CD8-positive, alpha-beta T cell (primary cell): ENCODE measurements at regions of chr3 and their contacts with region 1.

Region 1: DNA sequence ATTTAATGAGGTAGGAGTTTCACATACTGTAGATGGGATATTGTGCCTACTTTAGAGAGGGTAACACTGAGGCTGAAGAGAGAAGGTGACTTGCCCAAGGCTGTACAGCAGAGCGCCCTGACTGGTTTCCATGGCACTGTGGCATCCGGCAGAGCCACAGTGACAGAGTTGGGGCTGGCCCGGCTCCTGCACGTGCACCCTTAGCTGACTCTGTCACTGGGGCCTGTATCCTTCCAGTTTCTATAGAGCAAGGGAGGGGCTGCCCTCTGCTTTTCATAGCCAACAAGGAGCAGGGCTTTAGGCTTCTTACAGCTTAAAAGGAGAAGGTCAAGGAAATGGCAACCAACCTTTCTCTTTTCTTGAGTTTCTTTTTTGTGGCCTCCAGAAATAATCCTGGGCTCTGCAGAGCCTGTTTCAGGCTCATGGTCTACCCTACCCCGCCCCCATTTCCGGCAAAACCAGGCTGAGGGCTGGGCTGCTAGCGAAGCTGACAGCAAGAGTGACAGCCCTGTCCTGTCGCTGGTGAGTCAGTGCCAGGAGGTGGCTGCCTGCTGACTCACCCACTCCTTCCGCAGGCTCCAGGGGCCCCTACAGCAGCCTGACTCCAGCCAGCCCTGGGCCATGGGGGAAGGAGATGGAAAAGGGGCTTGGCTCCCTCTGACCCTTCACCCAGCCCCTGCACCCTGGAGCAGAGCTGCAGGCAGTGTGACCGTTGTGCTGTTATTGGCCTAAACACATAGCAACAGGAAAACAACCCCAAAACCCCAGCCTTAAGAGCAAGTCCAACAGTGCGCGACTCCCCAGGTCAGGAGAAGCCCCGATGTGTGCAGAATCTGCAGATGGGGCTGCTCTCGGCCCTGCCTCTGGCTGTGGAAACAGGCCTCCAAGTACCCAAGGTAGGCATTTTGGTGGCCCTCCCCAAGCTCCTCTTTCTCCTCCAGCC is 29.8 kb downstream of the SLC6A6 start:
- DNase-seq: peak; percentile 85 to 97 (median 95)
- ATAC-seq: peak; percentile 83
- H3K4me3 ChIP-seq: peak overlapping the region in 1 of 2 experiments; percentile 27
- H3K4me3 Mint-ChIP-seq: peak overlapping the region; percentile 75
- H3K27ac ChIP-seq: peak overlapping the region; percentile 66 to 95
- H3K27ac Mint-ChIP-seq: peak overlapping the region; percentile 99
- H3K4me1 ChIP-seq: peaks cover 75% of the 10 kb centered on the region
- H3K4me1 Mint-ChIP-seq: peaks cover 85% of the 10 kb centered on the region
- H3K27me3 ChIP-seq: no peaks in the 10 kb centered on the region
- H3K27me3 Mint-ChIP-seq: no peaks in the 10 kb centered on the region
- CTCF ChIP-seq: no peak

Region 2: DNA sequence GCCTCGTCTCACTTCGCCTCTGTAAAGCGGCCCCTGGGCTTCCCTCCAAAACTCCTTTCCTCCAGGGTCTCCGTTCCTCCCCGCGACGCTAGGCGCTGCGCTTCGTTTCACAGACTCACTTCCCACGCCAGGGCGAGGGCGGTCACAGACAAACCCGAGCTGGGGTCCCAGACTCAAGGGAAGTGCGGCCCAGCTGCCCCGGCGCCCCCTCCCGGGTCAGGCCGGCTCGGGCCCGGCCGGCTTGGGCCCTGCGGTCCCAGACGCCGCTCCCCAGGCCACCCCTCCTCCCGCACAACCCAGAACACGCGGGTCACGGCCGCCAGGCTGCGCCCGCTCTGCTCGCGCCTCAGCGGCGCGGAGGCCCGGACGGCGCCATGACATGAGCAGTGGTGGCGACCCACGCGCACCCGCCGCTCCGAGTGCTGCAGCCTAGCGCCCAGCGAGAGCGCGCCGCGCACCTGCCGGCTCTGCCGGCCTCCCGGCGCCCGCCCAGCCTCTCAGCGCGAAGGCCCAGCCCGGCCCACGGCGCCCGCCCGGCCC is 1012.6 kb before region 1 on chr3:
- CTCF ChIA-PET with region 1: no interaction called
- POLR2A ChIA-PET with region 1: no interaction called
- intact Hi-C with region 1: loop called (anchors 10 kb)
- DNase-seq: peak; percentile 40 to 83 (median 66)
- ATAC-seq: peak; percentile 29
- H3K4me3 ChIP-seq: peak overlapping the region; percentile 72 to 82
- H3K4me3 Mint-ChIP-seq: peak overlapping the region; percentile 91
- H3K27ac ChIP-seq: peak overlapping the region; percentile 74 to 89
- H3K27ac Mint-ChIP-seq: peak overlapping the region; percentile 96
- H3K4me1 ChIP-seq: peaks cover 57% of the 10 kb centered on the region
- H3K4me1 Mint-ChIP-seq: peaks cover 76% of the 10 kb centered on the region
- H3K27me3 ChIP-seq: no peaks in the 10 kb centered on the region
- H3K27me3 Mint-ChIP-seq: no peaks in the 10 kb centered on the region
- CTCF ChIP-seq: no peak

Region 3: DNA sequence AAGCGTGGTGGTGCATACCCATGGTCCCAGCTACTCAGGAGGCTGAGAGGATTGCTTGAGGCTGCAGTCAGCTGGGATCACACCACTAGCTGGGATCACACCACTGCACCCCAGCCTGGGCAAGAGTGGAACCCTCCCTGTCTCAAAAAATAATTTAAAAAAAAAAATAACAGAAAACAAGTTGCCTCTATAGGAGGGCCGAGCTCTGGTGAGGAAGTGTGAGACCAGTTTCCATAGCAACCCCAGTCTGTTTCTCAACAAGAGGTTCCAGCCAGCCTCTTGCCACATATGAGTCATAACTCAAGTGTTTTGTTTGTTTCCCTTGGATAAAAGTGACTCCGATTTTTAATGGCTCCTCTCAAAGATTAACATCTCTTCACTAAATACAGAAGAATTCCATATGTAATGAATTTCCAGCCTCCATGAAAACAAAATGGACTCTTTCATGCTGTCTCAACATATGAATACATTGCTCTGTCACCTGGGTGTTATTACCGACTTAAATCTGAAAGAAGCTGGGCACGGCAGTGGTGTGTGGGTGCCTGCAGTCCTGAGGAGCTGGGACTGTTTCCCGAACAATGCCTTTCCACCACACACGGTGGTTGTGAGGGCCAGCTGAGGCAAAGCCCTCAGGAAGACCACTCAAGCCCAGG is 287.6 kb before region 1 on chr3:
- CTCF ChIA-PET with region 1: no interaction called
- POLR2A ChIA-PET with region 1: no interaction called
- intact Hi-C with region 1: loop called (anchors 1 to 2 kb)
- DNase-seq: peak; percentile 52 to 98 (median 71)
- ATAC-seq: peak; percentile 69
- H3K4me3 ChIP-seq: peak overlapping the region; percentile 15 to 20
- H3K4me3 Mint-ChIP-seq: peak overlapping the region; percentile 66
- H3K27ac ChIP-seq: peak overlapping the region; percentile 95 to 96
- H3K27ac Mint-ChIP-seq: peak overlapping the region; percentile 98
- H3K4me1 ChIP-seq: peaks cover 55% of the 10 kb centered on the region
- H3K4me1 Mint-ChIP-seq: peaks cover 48% of the 10 kb centered on the region
- H3K27me3 ChIP-seq: no peaks in the 10 kb centered on the region
- H3K27me3 Mint-ChIP-seq: no peaks in the 10 kb centered on the region
- CTCF ChIP-seq: no peak

Region 4: GRCh38 chr3:14461748-14462324 is 29.7 kb after region 1 on chr3:
- CTCF ChIA-PET with region 1: interaction called, 21 read pairs
- POLR2A ChIA-PET with region 1: interaction called, 4 read pairs
- intact Hi-C with region 1: loop called in 1 of 2 experiments (anchors 2 kb)
- DNase-seq: peak in 8 of 9 experiments; percentile 22 to 68 (median 53)
- ATAC-seq: peak; percentile 64
- H3K4me3 ChIP-seq: no peak overlapping the region
- H3K4me3 Mint-ChIP-seq: no peak overlapping the region
- H3K27ac ChIP-seq: no peak overlapping the region
- H3K27ac Mint-ChIP-seq: no peak overlapping the region
- H3K4me1 ChIP-seq: no peaks in the 10 kb centered on the region
- H3K4me1 Mint-ChIP-seq: no peaks in the 10 kb centered on the region
- H3K27me3 ChIP-seq: no peaks in the 10 kb centered on the region
- H3K27me3 Mint-ChIP-seq: no peaks in the 10 kb centered on the region
- CTCF ChIP-seq: no peak

Region 5: DNA sequence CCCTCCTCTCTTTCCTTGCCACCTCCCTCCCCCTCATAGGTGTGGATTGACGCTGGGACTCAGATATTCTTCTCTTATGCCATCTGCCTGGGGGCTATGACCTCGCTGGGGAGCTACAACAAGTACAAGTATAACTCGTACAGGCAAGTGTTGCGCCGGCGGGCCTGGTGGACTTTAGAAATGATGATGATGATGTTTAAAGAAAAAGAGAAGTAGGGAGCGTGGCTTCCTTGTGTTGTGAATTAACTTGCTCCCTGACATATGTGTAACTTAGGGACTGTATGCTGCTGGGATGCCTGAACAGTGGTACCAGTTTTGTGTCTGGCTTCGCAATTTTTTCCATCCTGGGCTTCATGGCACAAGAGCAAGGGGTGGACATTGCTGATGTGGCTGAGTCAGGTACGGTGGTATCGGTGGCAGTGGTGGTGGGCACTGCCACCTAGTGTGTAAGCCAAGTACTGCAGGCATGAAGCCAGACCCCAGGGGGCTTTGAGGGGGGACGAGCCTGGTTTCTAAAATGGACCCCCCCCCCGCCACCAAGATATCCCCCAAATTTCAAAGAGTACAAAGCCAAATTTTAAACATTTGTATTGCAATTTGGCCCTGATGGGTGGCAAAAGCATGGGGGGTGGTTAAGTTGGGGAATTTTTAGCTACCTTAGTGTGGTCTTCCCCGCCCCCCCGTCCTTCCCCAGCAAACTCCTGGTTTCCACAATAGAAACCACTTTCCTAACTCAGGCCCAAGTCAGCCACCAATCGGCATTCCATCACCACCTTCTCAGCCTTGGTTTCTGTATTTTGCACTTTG is 35.9 kb after region 1 on chr3:
- CTCF ChIA-PET with region 1: interaction called, 21 read pairs
- POLR2A ChIA-PET with region 1: no interaction called
- intact Hi-C with region 1: loop called in 1 of 2 experiments (anchors 1 kb)
- DNase-seq: peak; percentile 17 to 69 (median 48)
- ATAC-seq: peak; percentile 84
- H3K4me3 ChIP-seq: no peak overlapping the region
- H3K4me3 Mint-ChIP-seq: no peak overlapping the region
- H3K27ac ChIP-seq: no peak overlapping the region
- H3K27ac Mint-ChIP-seq: no peak overlapping the region
- H3K4me1 ChIP-seq: no peaks in the 10 kb centered on the region
- H3K4me1 Mint-ChIP-seq: no peaks in the 10 kb centered on the region
- H3K27me3 ChIP-seq: no peaks in the 10 kb centered on the region
- H3K27me3 Mint-ChIP-seq: no peaks in the 10 kb centered on the region
- CTCF ChIP-seq: peak; percentile 87

Region 6: DNA sequence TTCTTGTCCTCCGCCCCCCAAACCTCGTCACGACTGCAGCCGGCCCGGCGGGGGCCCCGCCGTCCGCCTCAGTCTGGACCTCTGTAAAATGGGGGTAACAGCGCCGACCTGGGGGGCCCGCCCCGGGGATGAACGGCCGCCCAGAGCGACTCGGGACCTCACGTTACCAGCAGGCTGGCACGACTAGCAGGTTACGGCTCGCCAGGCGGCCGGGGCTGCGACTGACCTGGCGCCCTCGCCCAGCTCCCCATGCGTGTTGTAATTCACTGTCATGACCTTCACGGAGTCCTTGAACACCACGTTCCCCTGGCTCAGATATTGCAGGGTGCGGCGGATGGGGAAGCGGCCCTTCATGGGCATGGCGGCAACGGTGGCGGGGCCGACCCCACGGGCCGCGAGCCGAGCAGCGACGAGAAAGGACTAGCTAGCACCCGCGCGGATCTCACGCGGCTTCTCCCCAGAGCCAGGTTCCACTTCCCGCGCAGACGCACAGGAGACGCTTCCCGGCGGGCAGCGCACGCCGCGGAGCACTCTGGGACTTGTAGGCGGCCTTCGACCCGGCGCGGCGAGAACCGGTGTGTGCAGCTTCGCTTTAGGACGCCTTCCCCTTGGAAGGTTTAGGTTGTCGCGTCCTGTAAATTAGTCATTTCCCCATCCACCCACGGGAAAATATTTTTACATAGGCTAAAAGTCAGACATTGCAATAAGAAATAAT is 632.8 kb after region 1 on chr3 and contains the start of gene MRPS25:
- CTCF ChIA-PET with region 1: no interaction called
- POLR2A ChIA-PET with region 1: no interaction called
- intact Hi-C with region 1: loop called in 1 of 2 experiments (anchors 10 kb)
- DNase-seq: peak; percentile 75 to 94 (median 89)
- ATAC-seq: peak; percentile 98
- H3K4me3 ChIP-seq: peak within 1 kb of the TSS; percentile 89 to 96
- H3K4me3 Mint-ChIP-seq: peak within 1 kb of the TSS; percentile 98
- H3K27ac ChIP-seq: peak within 1 kb of the TSS; percentile 78 to 85
- H3K27ac Mint-ChIP-seq: peak within 1 kb of the TSS; percentile 97
- H3K4me1 ChIP-seq: peaks cover 17% of the 10 kb centered on the region
- H3K4me1 Mint-ChIP-seq: peaks cover 26% of the 10 kb centered on the region
- H3K27me3 ChIP-seq: no peaks in the 10 kb centered on the region
- H3K27me3 Mint-ChIP-seq: no peaks in the 10 kb centered on the region
- CTCF ChIP-seq: no peak
- total RNA-seq, gene MRPS25: 51.3 to 56.2 TPM